Activated CD4-positive, alpha-beta T cell treated with anti-CD3 and anti-CD28 coated beads, Interleukin-2, amount 10 ng/mL, durations not matched to agents 7 days and 5 days (primary cell): ENCODE measurements at regions of chr7 and their contacts with region 1.

Region 1: DNA sequence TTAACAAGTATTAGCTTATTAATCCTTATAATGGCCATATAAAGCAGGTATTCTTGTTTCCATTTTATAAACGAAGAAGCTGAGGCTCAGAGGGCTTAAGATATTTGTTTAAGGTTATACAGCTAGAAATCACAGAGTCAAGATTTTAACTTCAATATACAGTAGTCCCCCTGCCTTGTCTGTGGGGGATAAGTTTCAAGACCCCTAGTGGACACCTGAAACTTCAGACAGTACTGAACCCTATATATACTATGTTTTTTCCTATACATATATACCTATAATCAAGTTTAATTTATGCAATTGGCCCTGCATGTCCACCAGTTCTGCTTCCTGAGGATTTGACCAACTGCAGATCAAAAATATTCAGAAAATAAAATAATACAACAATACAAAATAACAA is 44.4 kb upstream of the STRIP2 start:
- DNase-seq: no peak
- H3K4me3 Mint-ChIP-seq: no peak overlapping the region
- H3K27ac Mint-ChIP-seq: no peak overlapping the region
- H3K4me1 Mint-ChIP-seq: peaks cover 8% of the 10 kb centered on the region
- H3K27me3 Mint-ChIP-seq: no peaks in the 10 kb centered on the region

Region 2: DNA sequence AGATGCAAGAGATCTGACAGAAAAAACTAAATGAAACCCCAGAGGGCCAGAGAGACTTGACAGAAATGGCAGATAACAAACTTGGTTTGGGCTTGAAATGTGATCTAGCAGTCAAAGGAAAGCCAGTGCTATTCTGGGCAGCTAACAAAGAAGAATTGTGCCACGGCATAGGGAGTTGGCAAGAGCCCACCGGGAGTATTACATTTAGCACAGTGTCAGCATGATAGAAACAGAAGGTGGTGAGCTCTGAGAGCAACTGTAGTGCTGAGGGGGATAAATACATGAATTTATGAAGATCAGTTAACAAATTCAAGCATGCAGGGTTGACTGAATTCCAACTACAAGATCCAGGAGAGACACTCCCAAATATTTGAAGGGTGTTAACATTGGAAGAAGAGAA is 73.9 kb before region 1 on chr7:
- CTCF ChIA-PET with region 1: no interaction called
- POLR2A ChIA-PET with region 1: no interaction called
- DNase-seq: no peak
- H3K4me3 Mint-ChIP-seq: no peak overlapping the region
- H3K27ac Mint-ChIP-seq: no peak overlapping the region
- H3K4me1 Mint-ChIP-seq: no peaks in the 10 kb centered on the region
- H3K27me3 Mint-ChIP-seq: no peaks in the 10 kb centered on the region

Region 3: GRCh38 chr7:129376076-129376777 is 13.6 kb before region 1 on chr7:
- CTCF ChIA-PET with region 1: interaction called, 48 read pairs
- POLR2A ChIA-PET with region 1: no interaction called
- DNase-seq: peak; percentile 68
- H3K4me3 Mint-ChIP-seq: no peak overlapping the region
- H3K27ac Mint-ChIP-seq: no peak overlapping the region
- H3K4me1 Mint-ChIP-seq: peaks cover 28% of the 10 kb centered on the region
- H3K27me3 Mint-ChIP-seq: no peaks in the 10 kb centered on the region